Vagina (tissue), 2 donors: ENCODE measurements at regions of chr12 and their contacts with region 1.

Region 1: DNA sequence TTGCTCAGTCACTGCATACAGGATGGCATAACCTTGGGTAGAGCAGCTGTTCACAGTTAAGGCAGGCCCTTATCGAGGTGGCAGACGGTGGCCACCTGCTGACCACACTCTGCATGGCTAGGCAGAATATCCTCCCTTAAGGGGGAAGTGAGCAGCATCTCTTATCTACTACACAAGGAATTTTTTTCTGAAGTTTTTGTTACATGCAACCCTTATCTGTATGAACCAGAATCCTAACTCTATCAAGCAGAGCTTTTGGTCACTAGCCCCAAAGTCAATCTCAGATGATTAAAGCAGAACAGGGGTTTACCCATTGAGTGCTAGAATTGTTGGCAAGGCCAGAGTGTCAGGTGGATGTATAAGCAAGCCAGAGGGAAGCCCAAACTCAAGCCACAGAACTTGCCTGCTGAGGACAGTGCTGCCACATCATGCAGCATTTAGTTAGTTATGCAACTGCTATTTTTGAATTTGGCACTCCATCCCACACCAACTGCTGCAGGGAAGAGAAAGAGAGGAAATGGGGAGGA is 192.8 kb downstream of the TBX5 start:
- DNase-seq: no peak
- H3K4me3 ChIP-seq: no peak overlapping the region
- H3K27ac ChIP-seq: no peak overlapping the region
- H3K4me1 ChIP-seq: no peaks in the 10 kb centered on the region
- H3K27me3 ChIP-seq: no peaks in the 10 kb centered on the region
- CTCF ChIP-seq: no peak
- POLR2A ChIP-seq: no peak

Region 2: DNA sequence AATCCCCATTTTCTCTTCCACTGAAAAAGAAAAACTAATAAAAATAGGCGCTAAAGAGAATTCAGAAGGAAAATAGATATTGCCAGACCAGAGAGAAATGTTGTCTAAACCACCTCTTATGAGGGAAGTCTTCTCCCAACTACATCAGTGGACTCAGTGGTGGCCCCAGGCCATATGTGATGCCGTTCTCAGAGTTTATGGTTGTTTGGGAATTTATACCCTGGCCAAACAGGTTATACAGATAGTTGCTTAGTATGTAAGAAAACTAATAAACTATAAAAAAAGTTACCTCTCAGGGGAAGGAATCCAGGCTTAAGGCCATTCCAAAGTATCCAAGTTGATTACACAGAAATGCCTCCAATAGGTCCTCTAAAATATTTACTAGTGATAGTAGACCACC is 143.6 kb before region 1 on chr12:
- intact Hi-C with region 1: loop called (anchors 5 kb)
- DNase-seq: no peak
- H3K4me3 ChIP-seq: no peak overlapping the region
- H3K27ac ChIP-seq: no peak overlapping the region
- H3K4me1 ChIP-seq: no peaks in the 10 kb centered on the region
- H3K27me3 ChIP-seq: no peaks in the 10 kb centered on the region
- CTCF ChIP-seq: no peak
- POLR2A ChIP-seq: no peak

Region 3: GRCh38 chr12:114403011-114403689 is 190.0 kb after region 1 on chr12:
- intact Hi-C with region 1: no loop called
- DNase-seq: no peak
- H3K4me3 ChIP-seq: no peak overlapping the region
- H3K27ac ChIP-seq: no peak overlapping the region
- H3K4me1 ChIP-seq: peaks cover 9% of the 10 kb centered on the region
- H3K27me3 ChIP-seq: peaks cover 4% of the 10 kb centered on the region
- CTCF ChIP-seq: no peak
- POLR2A ChIP-seq: no peak